ENCODE measurements at regions of chr3 and their contacts with region 1.

Region 1: DNA sequence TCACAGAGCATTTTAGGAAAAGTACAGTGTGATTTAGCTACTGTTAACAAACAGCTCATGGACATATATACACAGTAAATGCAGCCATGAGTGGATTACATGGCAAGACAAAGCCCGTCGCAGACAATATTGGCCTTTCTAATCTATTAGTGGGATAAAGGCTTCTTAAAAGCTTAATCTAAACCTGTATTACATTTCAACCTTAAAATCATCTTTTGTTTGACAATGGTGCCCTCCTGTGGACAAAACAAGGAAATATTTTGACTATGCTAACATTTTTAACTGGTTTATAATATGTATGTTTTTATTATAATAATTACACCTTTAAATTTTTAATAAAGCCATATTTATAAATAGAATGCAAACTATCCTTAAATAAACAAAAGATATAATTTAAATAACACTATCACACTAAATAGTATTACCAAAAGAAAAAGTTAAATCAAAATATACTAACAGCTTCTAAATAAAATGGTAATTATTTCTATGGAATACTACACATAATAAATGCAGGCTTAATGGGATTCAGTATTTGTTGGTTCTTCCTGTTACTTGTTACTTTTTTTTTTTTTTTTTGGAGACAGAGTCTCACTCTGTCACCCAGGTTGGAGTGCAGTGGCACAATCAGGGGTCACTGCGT is 38.6 kb downstream of the TAFA4 start:
- DNase-seq: peak; percentile 63
- H3K4me3 ChIP-seq: no peak overlapping the region
- H3K27ac ChIP-seq: no peak overlapping the region
- H3K4me1 ChIP-seq: no peaks in the 10 kb centered on the region
- H3K27me3 ChIP-seq: peaks cover 4 to 5% of the 10 kb centered on the region in 2 experiments
- CTCF ChIP-seq: peak in 1 of 2 donors; percentile 15
- POLR2A ChIP-seq: no peak

Region 2: DNA sequence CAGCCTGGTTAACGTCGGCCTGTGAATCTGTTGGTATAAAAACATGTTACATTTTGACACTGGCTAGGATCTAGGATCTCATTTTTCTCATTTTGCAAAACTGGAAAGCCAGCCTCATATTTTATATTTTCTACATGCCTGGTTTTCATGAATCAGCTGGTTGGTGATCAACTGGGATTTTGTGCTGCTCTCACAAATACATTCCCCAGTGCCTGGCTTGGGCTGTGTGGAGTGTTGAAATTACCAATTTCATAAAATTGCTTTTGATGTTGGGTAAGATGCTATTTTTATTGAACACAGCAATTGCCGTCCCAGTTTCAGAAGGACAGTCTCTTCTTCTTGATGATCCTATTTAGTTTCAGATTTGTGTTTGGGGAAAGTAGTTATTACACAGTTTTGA is 565.7 kb before region 1 on chr3:
- CTCF ChIA-PET with region 1: no interaction called
- POLR2A ChIA-PET with region 1: no interaction called
- dilution Hi-C with region 1: no loop called
- intact Hi-C with region 1: no loop called
- DNase-seq: no peak
- H3K4me3 ChIP-seq: no peak overlapping the region
- H3K27ac ChIP-seq: no peak overlapping the region
- H3K4me1 ChIP-seq: no peaks in the 10 kb centered on the region
- H3K27me3 ChIP-seq: no peaks in the 10 kb centered on the region
- CTCF ChIP-seq: no peak
- POLR2A ChIP-seq: no peak

Region 3: GRCh38 chr3:68832680-68833079 is 61.0 kb before region 1 on chr3:
- CTCF ChIA-PET with region 1: no interaction called
- POLR2A ChIA-PET with region 1: no interaction called
- dilution Hi-C with region 1: no loop called
- intact Hi-C with region 1: no loop called
- DNase-seq: no peak
- H3K4me3 ChIP-seq: no peak overlapping the region
- H3K27ac ChIP-seq: no peak overlapping the region
- H3K4me1 ChIP-seq: no peaks in the 10 kb centered on the region
- H3K27me3 ChIP-seq: no peaks in the 10 kb centered on the region
- CTCF ChIP-seq: no peak
- POLR2A ChIP-seq: no peak

Region 4: DNA sequence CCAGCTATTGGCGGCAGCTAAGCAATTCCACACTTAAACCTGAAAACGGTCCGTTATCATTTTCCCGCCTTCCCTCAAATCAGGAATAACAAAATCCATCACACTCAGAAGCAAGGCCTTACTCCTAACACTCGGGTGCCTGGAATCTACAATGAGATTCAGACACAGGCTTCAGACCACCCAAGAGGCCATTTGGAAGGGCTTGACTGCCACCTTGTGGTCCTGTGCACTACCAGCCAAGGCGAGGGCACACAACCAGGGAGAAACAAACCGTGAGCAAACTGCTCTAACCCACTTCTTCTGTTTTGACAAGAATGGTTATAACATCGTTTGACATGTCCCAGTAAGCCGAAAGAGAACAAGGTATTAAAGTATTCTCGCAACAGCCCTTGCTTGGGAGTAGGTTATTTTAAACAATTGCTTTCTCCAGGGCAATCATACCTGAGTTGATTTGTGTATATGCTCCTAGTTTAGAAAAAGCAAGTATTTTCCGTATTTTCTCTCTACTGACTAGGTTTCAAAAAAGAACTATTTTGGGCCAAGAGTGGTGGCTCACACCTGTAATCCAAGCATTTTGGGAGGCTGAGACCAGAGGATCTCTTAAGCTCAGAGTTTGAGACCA is 78.7 kb after region 1 on chr3:
- CTCF ChIA-PET with region 1: interaction called, 21 read pairs
- POLR2A ChIA-PET with region 1: no interaction called
- dilution Hi-C with region 1: no loop called
- intact Hi-C with region 1: loop called (anchors 1 kb)
- DNase-seq: peak; percentile 65
- H3K4me3 ChIP-seq: no peak overlapping the region
- H3K27ac ChIP-seq: no peak overlapping the region
- H3K4me1 ChIP-seq: peaks cover 12% of the 10 kb centered on the region
- H3K27me3 ChIP-seq: peaks cover 10 to 21% of the 10 kb centered on the region in 2 experiments
- CTCF ChIP-seq: peak; percentile 89 to 90
- POLR2A ChIP-seq: no peak

Measured in endothelial cell of umbilical vein (primary cell).